Right ventricle myocardium inferior (tissue), 1 donor: ENCODE measurements at regions of chr1 and their contacts with region 1.

Region 1: GRCh38 chr1:41842993-41843755 is 75.5 kb downstream of the HIVEP3 start:
- DNase-seq: no peak
- ATAC-seq: no peak

Region 2: DNA sequence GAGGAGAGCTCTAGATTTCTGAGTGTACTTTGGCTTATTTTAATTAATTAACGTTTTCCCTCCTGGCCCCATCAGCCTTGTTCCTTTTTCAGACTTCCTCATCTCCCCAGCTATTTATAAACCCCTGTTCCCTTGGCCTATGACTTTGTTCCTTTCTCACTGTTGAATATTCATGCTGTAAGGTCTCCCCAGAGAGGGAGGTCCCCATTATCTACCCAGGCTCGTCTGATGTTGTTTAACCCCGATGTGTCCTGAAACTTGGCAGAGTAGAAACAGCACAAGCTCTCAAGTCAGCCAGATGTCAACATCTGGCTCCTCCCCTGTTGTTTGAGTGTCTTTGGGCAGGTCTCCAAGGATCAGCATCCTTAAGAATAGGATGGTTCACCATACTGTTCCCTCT is 78.0 kb before region 1 on chr1:
- intact Hi-C with region 1: loop called (anchors 10 kb)
- DNase-seq: no peak
- ATAC-seq: peak; percentile 62

Region 3: DNA sequence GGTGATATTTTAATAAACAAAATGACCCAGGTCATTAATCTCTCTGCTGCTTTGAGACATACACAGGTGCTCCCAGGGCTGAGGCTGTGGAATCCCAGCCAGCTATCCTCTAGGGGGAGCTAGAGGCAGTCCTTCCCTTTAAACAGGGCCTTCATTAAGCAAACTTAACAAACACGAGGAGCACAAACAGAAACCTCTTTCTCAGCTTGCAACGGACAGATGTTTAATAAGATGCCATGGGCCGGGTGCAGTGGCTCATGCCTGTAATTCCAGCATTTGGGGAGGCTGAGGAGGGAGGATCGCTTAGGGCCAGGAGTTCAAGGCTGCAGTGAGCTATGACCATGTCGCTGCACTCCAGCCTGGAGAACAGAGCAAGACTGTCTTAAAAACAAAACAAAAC is 31.1 kb before region 1 on chr1:
- intact Hi-C with region 1: loop called (anchors 2 kb)
- DNase-seq: no peak
- ATAC-seq: no peak

Region 4: GRCh38 chr1:41882068-41882477 is 38.9 kb after region 1 on chr1:
- intact Hi-C with region 1: loop called (anchors 5 kb)
- DNase-seq: no peak
- ATAC-seq: no peak

Region 5: DNA sequence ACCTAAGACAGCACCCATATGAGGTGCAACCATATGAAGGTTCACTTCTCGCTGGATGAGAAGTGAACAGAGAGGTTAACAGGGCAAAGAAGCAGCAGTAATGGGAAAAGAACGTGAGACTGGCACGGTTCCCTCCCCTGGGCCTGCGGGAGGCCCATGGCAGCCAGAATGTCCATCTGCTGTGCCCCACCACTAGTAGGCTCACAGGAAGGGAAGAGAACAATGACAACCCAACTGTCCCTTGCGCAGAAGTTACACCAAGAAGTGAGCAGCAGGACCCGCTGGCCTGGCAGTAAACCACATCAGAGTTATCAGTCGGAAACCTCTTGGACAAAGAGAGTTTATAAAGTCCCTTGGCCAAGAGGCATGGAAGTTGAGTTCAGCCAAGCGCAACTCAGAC is 64.3 kb after region 1 on chr1:
- intact Hi-C with region 1: no loop called
- DNase-seq: no peak
- ATAC-seq: no peak

Region 6: GRCh38 chr1:41919764-41920397 is 76.7 kb after region 1 on chr1:
- intact Hi-C with region 1: loop called (anchors 5 kb)
- DNase-seq: no peak
- ATAC-seq: peak; percentile 79

Region 7: DNA sequence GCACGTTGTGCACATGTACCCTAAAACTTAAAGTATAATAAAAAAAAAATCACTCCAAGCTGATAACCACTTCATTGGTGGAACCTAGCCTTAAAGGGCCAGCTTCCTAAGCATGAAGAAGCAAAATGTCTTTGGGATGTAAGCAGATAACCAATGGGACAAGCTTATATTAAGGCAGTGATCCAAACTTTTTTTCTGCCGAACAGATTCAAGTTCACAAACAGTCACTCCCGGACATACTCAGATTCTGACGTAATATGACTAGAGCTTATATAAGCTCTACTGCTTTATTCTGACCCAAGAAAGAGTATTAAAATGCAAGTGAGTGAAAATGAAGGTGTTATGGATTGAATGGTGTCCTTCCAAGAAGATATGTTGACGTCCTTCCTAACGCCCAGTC is 120.5 kb after region 1 on chr1:
- intact Hi-C with region 1: no loop called
- DNase-seq: no peak
- ATAC-seq: no peak

Region 8: GRCh38 chr1:42135408-42135807 is 292.2 kb after region 1 on chr1:
- intact Hi-C with region 1: no loop called
- DNase-seq: no peak
- ATAC-seq: no peak